Aorta (tissue), 5 donors: ENCODE measurements at regions of chr20 and their contacts with region 1.

Region 1: GRCh38 chr20:54320115-54320607 is 112.3 kb downstream of the PFDN4 start:
- DNase-seq: no peak
- ATAC-seq: no peak
- H3K4me3 ChIP-seq: no peak overlapping the region
- H3K27ac ChIP-seq: no peak overlapping the region
- H3K4me1 ChIP-seq: peaks cover 2 to 3% of the 10 kb centered on the region in 2 donors
- H3K27me3 ChIP-seq: no peaks in the 10 kb centered on the region

Region 2: GRCh38 chr20:54267510-54268003 is 52.6 kb before region 1 on chr20:
- intact Hi-C with region 1: loop called in 1 of 2 experiments (anchors 10 kb)
- DNase-seq: peak in 1 of 2 donors; percentile 42
- ATAC-seq: peak; percentile 26
- H3K4me3 ChIP-seq: no peak overlapping the region
- H3K27ac ChIP-seq: no peak overlapping the region
- H3K4me1 ChIP-seq: no peaks in the 10 kb centered on the region
- H3K27me3 ChIP-seq: no peaks in the 10 kb centered on the region